Aorta (tissue), 5 donors: ENCODE measurements at regions of chr11 and their contacts with region 1.

Region 1: GRCh38 chr11:46308631-46309419 is 31.4 kb downstream of the CREB3L1 start:
- DNase-seq: peak; percentile 82 to 93
- ATAC-seq: peak; percentile 87
- H3K4me3 ChIP-seq: no peak overlapping the region
- H3K27ac ChIP-seq: no peak overlapping the region
- H3K4me1 ChIP-seq: no peaks in the 10 kb centered on the region
- H3K27me3 ChIP-seq: no peaks in the 10 kb centered on the region

Region 2: GRCh38 chr11:46238967-46239800 is 69.6 kb before region 1 on chr11:
- intact Hi-C with region 1: loop called (anchors 1 to 2 kb)
- DNase-seq: peak; percentile 89 to 95
- ATAC-seq: peak; percentile 94
- H3K4me3 ChIP-seq: no peak overlapping the region
- H3K27ac ChIP-seq: no peak overlapping the region
- H3K4me1 ChIP-seq: no peaks in the 10 kb centered on the region
- H3K27me3 ChIP-seq: no peaks in the 10 kb centered on the region